ENCODE measurements at regions of chr14 and their contacts with region 1.

Region 1: GRCh38 chr14:65170768-65171507 is 68.6 kb upstream of the MAX start:
- DNase-seq: peak in 1 of 2 experiments; percentile 74
- H3K4me3 ChIP-seq: 0 out of 8 replicates have a peak overlapping the region, but pooled peaks of 1 of the 4 experiments have one; percentile 11
- H3K27ac ChIP-seq: no peak overlapping the region
- H3K4me1 ChIP-seq: peaks cover 3 to 13% (median 11%) of the 10 kb centered on the region in 4 experiments; a peak in 6 of 7 replicates
- H3K27me3 ChIP-seq: no peaks in the 10 kb centered on the region
- CTCF ChIP-seq: peak; percentile 43 to 74 (median 71); a peak in 3 of 4 replicates
- EP300 ChIP-seq: no peak
- POLR2A ChIP-seq: no peak
- RAD21 ChIP-seq: peak; percentile 65 to 75

Region 2: GRCh38 chr14:65184032-65184764 is 13.3 kb after region 1 on chr14:
- CTCF ChIA-PET with region 1: interaction called, 13 read pairs
- POLR2A ChIA-PET with region 1: no interaction called
- DNase-seq: no peak
- H3K4me3 ChIP-seq: no peak overlapping the region
- H3K27ac ChIP-seq: no peak overlapping the region
- H3K4me1 ChIP-seq: peaks cover 3 to 20% (median 11%) of the 10 kb centered on the region in 4 experiments
- H3K27me3 ChIP-seq: no peaks in the 10 kb centered on the region; a peak in 2 of 7 replicates
- CTCF ChIP-seq: no peak
- EP300 ChIP-seq: no peak
- POLR2A ChIP-seq: no peak
- RAD21 ChIP-seq: no peak

Region 3: DNA sequence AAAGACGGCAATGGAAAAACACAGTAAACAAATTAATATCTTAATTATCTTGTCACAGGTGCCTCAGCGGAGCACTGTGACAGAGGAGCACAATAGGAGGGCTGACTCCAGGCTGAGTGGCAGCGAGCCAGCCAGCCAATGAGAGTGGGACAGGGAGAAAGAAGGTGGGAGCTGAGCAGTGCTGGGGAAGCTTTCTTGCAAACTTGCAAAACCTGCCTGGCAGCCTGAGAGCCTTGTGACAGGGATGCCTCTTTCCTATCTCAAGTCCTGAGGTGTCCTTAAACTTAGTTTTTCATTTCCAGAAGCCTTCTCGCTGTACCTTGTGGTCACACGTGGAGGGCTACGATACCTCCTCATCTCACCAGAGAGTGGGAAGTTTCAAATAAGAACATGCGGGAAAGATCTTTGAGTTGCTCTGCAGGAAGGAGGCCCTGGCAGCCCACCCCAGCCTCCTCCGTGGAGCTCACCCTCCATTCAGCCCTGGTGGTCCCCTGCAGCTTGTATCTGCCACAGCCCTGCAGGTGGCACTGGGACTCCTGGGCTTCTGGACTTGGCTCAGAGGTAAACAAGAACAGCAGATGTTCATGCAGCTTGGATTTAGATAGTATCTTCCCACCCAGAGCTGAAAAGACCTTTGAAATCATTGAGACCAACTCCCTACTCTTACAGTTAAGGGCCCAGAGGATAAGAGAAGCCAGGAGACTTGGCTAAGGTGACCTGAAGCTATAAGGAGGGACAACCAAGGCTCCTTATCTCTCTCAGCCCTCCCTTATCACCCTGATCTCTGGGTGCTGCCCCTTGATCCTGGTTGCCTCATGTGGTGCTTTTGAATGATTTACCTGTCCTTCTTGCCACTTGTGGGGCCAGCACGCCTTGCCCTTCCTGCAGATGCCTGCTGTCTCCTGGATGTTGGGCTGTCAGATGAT is 84.9 kb after region 1 on chr14:
- CTCF ChIA-PET with region 1: no interaction called
- POLR2A ChIA-PET with region 1: no interaction called
- DNase-seq: peak; percentile 63 to 84
- H3K4me3 ChIP-seq: peak overlapping the region in 3 of 4 experiments; percentile 16 to 39 (median 26); a peak in 4 of 8 replicates
- H3K27ac ChIP-seq: no peak overlapping the region
- H3K4me1 ChIP-seq: peaks cover 6 to 16% (median 12%) of the 10 kb centered on the region in 4 experiments
- H3K27me3 ChIP-seq: no peaks in the 10 kb centered on the region
- CTCF ChIP-seq: peak in 2 of 3 experiments; percentile 11 to 22; a peak in 1 of 4 replicates
- EP300 ChIP-seq: no peak; a peak in 1 of 3 replicates
- POLR2A ChIP-seq: no peak
- RAD21 ChIP-seq: peak in 1 of 2 experiments; percentile 46; a peak in 2 of 4 replicates